ENCODE measurements at regions of chr6 and their contacts with region 1.

Region 1: DNA sequence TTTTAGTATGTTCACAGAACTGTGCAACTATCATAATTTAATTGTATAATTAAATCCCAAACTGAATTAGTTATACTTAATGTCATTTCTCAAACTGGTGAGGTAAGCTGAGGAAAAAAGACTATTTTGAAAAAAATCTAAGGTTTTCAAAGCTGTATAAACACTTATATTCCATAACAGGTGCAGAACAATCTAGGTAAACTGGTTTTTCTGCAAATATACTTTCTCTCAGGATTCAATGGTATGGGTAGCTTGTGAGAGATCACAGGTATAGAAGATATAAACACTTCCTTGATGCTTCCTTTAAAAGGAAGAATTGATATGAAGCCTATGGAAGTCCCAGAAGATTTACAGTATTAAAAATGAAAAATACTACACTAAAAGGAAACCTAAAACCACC is 33.7 kb downstream of the NOL7 start:
- DNase-seq: no peak
- H3K4me3 ChIP-seq: no peak overlapping the region
- H3K27ac ChIP-seq: no peak overlapping the region
- H3K4me1 ChIP-seq: no peaks in the 10 kb centered on the region
- H3K27me3 ChIP-seq: no peaks in the 10 kb centered on the region
- CTCF ChIP-seq: no peak

Region 2: DNA sequence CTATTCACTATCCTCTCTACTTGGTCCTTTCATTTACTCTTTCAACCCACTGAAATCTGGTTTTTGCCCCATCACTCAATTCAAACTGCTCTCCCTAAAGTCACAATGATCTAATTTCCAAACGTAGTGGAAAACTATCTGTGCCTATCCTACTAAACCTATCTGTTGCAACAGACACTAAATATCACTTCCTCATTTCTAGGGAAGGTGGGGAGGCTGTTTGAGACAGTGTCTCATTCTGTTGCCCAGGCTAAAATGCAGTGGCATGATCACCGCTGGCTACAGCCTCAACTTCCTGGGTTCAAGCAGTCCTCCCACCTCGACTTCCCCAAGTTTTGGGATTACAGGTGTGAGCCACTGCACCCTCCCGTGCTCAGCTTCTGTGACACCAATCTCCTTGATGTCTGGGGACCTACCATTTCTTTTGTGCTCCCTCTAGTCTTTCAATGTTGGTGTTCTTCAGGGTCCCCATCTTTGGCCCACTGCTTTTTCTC is 54.0 kb after region 1 on chr6:
- CTCF ChIA-PET with region 1: interaction called, 14 read pairs
- dilution Hi-C with region 1: no loop called
- in situ Hi-C with region 1: no loop called
- intact Hi-C with region 1: no loop called
- DNase-seq: no peak
- H3K4me3 ChIP-seq: no peak overlapping the region
- H3K27ac ChIP-seq: no peak overlapping the region
- H3K4me1 ChIP-seq: peaks cover 4% of the 10 kb centered on the region
- H3K27me3 ChIP-seq: no peaks in the 10 kb centered on the region
- CTCF ChIP-seq: no peak